Activated CD4-positive, alpha-beta memory T cell treated with anti-CD3 and anti-CD28 coated beads for 36 hours (primary cell): ENCODE measurements at regions of chr2 and their contacts with region 1.

Region 1: DNA sequence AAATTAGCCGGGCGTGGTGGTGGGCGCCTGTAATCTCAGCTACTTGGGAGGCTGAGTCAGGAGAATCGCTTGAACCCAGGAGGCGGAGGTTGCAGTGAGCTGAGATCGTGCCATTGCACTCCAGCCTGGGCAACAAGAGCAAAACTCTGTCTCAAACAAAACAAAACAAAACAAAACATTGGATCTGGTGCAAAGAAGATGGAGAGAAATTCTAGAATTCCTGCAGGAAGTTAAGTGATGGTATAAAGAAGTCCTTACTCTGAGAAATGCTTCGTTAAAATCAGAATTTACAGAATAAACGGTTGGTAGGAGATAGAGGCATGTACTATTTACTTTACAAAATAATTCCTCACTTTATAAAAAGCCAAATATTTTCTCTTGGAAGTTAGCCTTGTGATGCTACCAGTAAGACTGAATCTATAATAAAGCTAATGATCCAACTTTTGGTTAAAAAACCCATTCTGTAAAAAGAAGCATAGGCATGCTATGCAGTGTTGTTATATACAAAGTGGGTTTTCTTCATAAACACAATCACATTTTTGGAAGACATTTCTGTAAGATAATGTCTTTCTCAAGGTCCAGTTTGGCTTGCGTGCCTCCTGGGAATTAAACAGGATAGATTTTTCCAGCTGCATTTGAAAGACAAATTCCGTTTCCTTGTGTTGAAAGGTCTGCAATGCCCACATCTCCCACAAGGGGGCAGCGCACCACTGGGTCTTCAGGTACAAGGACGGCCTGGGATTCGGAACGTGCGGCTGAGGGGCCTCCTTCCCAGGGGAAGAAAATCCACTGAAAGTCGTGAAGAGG is 35.6 kb upstream of the PNO1 start:
- DNase-seq: peak; percentile 82
- H3K4me3 Mint-ChIP-seq: no peak overlapping the region
- H3K27ac Mint-ChIP-seq: no peak overlapping the region
- H3K4me1 Mint-ChIP-seq: no peaks in the 10 kb centered on the region
- H3K27me3 Mint-ChIP-seq: no peaks in the 10 kb centered on the region

Region 2: GRCh38 chr2:66888791-66889631 is 1233.1 kb before region 1 on chr2:
- CTCF ChIA-PET with region 1: no interaction called
- POLR2A ChIA-PET with region 1: no interaction called
- intact Hi-C with region 1: no loop called
- DNase-seq: no peak
- H3K4me3 Mint-ChIP-seq: no peak overlapping the region
- H3K27ac Mint-ChIP-seq: no peak overlapping the region
- H3K4me1 Mint-ChIP-seq: no peaks in the 10 kb centered on the region
- H3K27me3 Mint-ChIP-seq: peaks cover 2% of the 10 kb centered on the region

Region 3: DNA sequence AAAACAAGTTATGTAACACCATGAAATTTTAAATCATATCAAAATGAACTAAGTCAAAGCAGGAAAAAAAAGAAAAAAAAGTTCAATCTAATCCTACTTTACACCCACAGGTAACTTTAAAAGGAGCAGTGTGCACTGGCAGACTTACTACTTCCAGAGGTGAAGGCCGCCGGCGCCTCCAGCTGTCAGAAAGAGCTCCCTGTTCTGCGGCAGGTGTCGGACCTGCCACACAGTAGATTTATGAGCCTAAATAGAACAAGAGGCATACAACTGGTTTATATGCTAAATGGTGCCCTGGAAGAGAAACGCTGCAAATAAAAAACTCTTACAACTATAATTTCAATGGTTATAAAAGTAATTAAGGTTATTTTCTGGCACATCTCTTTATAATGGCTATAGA is 12.5 kb after region 1 on chr2:
- CTCF ChIA-PET with region 1: interaction called, 26 read pairs
- POLR2A ChIA-PET with region 1: no interaction called
- intact Hi-C with region 1: no loop called
- DNase-seq: no peak
- H3K4me3 Mint-ChIP-seq: no peak overlapping the region
- H3K27ac Mint-ChIP-seq: no peak overlapping the region
- H3K4me1 Mint-ChIP-seq: no peaks in the 10 kb centered on the region
- H3K27me3 Mint-ChIP-seq: no peaks in the 10 kb centered on the region

Region 4: GRCh38 chr2:68185541-68186164 is 63.6 kb after region 1 on chr2:
- CTCF ChIA-PET with region 1: interaction called, 7 read pairs
- POLR2A ChIA-PET with region 1: no interaction called
- intact Hi-C with region 1: loop called (anchors 2 kb)
- DNase-seq: peak; percentile 71
- H3K4me3 Mint-ChIP-seq: no peak overlapping the region
- H3K27ac Mint-ChIP-seq: no peak overlapping the region
- H3K4me1 Mint-ChIP-seq: peaks cover 21% of the 10 kb centered on the region
- H3K27me3 Mint-ChIP-seq: no peaks in the 10 kb centered on the region

Region 5: DNA sequence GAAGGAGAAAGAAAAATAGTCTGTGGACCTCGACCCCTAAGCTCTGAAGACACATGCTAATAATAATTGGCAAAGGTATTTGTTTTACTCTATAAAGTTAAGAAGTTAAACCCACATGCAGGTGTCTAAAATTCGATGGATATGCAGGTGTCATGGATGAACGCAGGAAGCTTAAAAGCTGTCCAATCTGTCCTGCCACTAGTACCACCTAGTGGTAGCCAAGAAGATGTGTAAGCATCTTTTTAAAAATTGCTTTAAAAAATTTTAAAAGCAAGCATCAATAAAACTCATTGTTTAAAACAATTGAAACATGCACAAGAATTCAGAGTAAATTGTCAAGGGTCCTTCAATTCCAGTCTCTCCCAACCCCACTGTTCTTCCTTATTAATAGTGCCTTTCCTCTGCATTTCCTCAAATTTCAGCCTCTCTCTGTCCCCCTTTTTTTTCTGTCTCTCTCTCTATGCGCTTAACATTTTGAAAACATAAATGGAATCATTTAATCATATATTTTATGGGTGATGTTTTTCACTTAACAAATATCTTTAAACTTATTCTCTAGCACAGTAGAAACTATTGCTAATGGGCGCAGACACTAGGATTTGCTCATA is 160.8 kb after region 1 on chr2:
- CTCF ChIA-PET with region 1: interaction called, 150 read pairs
- POLR2A ChIA-PET with region 1: no interaction called
- intact Hi-C with region 1: loop called (anchors 1 kb)
- DNase-seq: no peak
- H3K4me3 Mint-ChIP-seq: no peak overlapping the region
- H3K27ac Mint-ChIP-seq: no peak overlapping the region
- H3K4me1 Mint-ChIP-seq: no peaks in the 10 kb centered on the region
- H3K27me3 Mint-ChIP-seq: peaks cover 7% of the 10 kb centered on the region

Region 6: GRCh38 chr2:68295516-68295915 is 173.4 kb after region 1 on chr2:
- CTCF ChIA-PET with region 1: interaction called, 44 read pairs
- POLR2A ChIA-PET with region 1: no interaction called
- intact Hi-C with region 1: no loop called
- DNase-seq: no peak
- H3K4me3 Mint-ChIP-seq: no peak overlapping the region
- H3K27ac Mint-ChIP-seq: no peak overlapping the region
- H3K4me1 Mint-ChIP-seq: no peaks in the 10 kb centered on the region
- H3K27me3 Mint-ChIP-seq: no peaks in the 10 kb centered on the region

Region 7: DNA sequence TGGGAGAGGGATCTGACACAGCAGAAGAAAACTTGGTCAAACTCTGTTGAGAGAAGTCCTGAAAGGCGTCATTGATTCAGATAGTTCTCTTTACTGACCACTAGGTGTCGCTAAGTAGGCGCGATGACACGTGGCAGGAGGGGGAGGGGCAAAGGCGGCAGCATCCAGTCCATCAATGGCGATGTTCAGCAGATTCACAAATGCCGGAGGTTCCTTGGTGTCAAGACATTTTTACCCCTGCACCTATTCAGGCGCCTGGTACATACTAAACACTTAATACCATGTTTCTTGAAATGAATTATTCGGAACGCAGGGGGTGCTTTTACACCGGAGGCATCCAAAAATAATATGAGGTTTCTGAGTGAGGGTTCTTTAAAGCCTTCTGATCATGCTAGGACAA is 240.0 kb after region 1 on chr2:
- CTCF ChIA-PET with region 1: interaction called, 3 read pairs
- POLR2A ChIA-PET with region 1: no interaction called
- intact Hi-C with region 1: loop called (anchors 10 kb)
- DNase-seq: peak; percentile 87
- H3K4me3 Mint-ChIP-seq: peak overlapping the region; percentile 48
- H3K27ac Mint-ChIP-seq: no peak overlapping the region
- H3K4me1 Mint-ChIP-seq: peaks cover 12% of the 10 kb centered on the region
- H3K27me3 Mint-ChIP-seq: no peaks in the 10 kb centered on the region